Aorta (tissue), 5 donors: ENCODE measurements at regions of chr11 and their contacts with region 1.

Region 1: DNA sequence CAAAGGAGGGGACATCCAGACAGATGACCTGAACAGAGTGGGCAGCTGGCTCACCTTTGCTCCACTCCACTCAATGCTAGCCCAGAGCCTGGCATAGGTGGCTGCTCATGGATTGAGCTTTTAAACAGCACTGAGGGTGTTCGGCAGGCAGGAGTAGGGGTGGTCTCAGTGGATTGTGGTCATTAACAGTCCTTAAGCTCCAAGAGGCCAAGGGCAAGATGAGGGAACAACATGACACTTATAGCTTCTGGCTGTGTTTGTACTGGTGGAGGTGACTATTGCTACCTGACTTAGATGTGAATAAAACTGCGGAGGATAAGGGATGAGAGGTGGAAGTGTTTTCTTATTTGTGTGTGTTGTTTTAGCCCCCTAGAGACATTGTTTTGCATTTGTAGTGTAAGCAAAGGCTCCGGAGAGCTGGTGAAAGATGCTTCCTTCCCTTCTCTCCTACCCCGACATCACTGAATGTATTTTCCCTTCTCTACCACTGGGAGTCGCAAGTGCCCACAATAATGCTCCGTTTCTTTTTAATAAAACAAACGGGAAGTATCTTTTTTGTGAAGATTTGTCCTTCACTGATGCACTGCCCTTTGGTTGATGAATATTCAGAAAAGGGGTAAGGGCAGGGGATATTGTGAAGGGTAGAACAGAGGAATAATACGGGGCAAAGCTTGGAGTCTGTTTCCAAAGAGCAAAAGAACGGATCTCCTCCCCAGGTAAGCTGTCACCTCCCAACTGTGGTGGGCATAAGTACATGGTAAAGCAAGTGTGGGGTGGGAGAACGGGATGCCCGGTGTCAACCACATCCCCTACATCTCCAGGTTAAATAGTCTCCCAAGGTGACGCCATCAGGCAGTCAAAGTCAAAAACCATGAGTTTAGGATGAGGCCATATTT is 27.5 kb upstream of the MTNR1B start:
- DNase-seq: no peak
- ATAC-seq: no peak
- H3K4me3 ChIP-seq: no peak overlapping the region
- H3K27ac ChIP-seq: no peak overlapping the region
- H3K4me1 ChIP-seq: no peaks in the 10 kb centered on the region
- H3K27me3 ChIP-seq: no peaks in the 10 kb centered on the region

Region 2: GRCh38 chr11:92753151-92753550 is 188.8 kb before region 1 on chr11:
- intact Hi-C with region 1: no loop called
- DNase-seq: no peak
- ATAC-seq: no peak
- H3K4me3 ChIP-seq: no peak overlapping the region
- H3K27ac ChIP-seq: no peak overlapping the region
- H3K4me1 ChIP-seq: peaks cover 0 to 2% of the 10 kb centered on the region in 2 donors
- H3K27me3 ChIP-seq: no peaks in the 10 kb centered on the region

Region 3: GRCh38 chr11:92880381-92880780 is 61.5 kb before region 1 on chr11:
- intact Hi-C with region 1: no loop called
- DNase-seq: no peak
- ATAC-seq: no peak
- H3K4me3 ChIP-seq: no peak overlapping the region
- H3K27ac ChIP-seq: no peak overlapping the region
- H3K4me1 ChIP-seq: no peaks in the 10 kb centered on the region
- H3K27me3 ChIP-seq: no peaks in the 10 kb centered on the region

Region 4: DNA sequence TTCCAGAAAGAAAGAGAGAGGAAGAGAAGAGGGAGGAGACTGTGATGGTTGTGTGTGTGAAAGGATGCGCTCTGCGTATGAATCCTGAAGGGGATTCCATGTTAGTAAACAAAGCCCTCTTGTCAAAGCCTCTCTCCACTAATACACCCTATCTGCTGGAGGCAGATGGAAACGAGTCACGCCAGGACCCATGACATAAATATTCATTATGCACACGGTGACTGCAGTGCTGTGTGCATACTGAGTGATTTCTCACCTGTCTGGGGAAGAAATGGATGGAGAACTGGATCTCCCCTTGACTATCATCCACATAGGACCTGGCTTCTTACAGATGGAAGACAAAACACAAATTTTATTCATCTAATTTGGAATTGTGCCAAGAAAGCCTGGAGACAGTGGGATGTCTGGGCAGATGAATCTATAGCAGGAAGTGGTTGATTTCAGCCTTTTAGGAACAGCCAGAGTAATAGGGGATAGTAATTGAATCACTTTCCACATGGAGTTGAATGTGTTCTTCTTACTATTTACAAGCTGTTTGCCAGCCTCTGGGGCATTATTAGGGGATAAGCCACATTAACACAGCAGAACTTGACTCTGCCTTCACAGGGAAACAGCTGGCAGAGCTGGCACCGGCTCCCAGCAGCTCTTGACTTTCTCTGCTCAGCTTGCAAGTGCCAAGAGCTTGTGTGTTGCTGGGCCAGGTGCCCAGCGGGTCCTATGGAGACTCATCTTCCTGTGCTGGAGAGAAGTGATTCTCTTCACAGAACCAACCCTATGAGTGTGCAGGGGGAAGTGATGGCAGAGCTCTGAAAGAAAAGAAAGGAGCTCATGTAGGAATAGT is 36.6 kb after region 1 on chr11:
- intact Hi-C with region 1: no loop called
- DNase-seq: no peak
- ATAC-seq: no peak
- H3K4me3 ChIP-seq: no peak overlapping the region
- H3K27ac ChIP-seq: no peak overlapping the region
- H3K4me1 ChIP-seq: no peaks in the 10 kb centered on the region
- H3K27me3 ChIP-seq: no peaks in the 10 kb centered on the region

Region 5: DNA sequence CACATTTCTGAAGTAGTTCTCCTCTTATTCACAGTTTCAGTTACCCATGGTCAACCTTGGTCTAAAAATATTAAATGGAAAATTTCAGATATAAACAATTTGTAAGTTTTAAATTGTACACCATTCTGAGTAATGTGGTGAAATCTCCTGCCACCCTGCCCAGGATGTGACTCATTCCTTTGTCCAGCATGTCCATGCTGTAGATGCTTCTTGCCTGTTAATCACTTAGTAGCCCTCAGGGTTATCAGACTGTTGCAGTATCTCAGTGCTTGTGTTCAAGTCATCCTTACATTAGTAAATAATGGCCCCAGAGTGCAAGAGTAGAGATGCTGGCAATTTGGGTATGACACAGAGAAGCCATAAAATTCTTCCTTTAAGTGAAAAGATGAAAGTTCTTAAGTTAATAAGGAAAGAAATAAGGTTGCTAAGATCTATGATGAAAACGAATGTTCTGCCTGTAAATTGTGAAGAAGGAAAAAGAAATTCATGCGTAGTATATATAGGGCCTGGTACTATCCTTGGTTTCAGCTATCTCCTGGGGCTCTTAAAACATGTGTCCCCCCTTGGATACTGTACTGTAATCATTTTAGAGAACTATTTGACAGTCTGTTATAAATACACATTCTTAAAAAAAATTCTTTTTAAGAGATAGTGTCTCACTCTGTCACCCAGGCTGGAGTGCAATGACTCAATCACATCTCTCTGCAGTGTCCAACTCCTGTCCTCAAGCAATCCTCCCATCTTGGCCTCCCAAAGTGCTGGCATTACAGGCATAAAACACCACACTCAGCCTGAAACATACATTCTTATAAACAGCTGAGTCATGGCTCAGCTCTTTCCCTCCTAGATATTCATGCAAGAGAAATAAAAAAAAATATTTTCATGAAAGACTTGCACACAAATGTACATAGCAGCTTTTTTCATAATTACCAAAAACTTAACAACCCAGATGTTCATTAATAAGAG is 58.9 kb after region 1 on chr11:
- intact Hi-C with region 1: no loop called
- DNase-seq: no peak
- ATAC-seq: no peak
- H3K4me3 ChIP-seq: no peak overlapping the region
- H3K27ac ChIP-seq: no peak overlapping the region
- H3K4me1 ChIP-seq: no peaks in the 10 kb centered on the region
- H3K27me3 ChIP-seq: no peaks in the 10 kb centered on the region

Region 6: GRCh38 chr11:93063100-93063499 is 121.2 kb after region 1 on chr11:
- intact Hi-C with region 1: loop called in 1 of 2 experiments (anchors 10 kb)
- DNase-seq: no peak
- ATAC-seq: no peak
- H3K4me3 ChIP-seq: no peak overlapping the region
- H3K27ac ChIP-seq: no peak overlapping the region
- H3K4me1 ChIP-seq: no peaks in the 10 kb centered on the region
- H3K27me3 ChIP-seq: no peaks in the 10 kb centered on the region

Region 7: DNA sequence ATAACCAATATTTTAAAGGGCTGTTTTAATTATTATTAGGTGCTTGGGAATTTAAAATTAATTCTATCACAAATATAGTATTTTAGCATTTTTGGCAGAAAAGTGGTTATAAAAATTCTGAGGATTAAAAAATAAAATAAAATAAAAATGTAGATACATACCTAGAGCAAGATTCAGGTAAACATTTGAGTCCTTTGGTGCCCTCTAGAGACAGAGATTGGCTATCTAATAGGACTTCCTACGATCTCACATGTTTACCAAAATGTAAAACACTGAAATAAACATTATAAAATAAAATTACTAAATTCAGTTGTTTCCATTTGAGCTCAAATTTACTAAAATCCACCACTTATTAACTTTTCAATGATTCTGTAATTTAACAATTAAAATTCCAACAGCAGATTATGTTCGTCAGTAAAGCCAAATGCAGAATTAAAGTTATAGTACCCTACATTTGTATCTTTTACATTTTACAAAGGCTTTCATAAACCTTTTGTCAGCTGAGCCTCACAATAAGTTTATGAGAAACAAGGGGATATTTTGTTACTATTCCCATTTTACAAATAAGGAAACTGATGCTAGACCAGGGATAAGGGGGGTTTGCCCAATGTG is 228.1 kb after region 1 on chr11:
- intact Hi-C with region 1: loop called in 1 of 2 experiments (anchors 10 kb)
- DNase-seq: no peak
- ATAC-seq: no peak
- H3K4me3 ChIP-seq: no peak overlapping the region
- H3K27ac ChIP-seq: no peak overlapping the region
- H3K4me1 ChIP-seq: no peaks in the 10 kb centered on the region
- H3K27me3 ChIP-seq: no peaks in the 10 kb centered on the region

Region 8: DNA sequence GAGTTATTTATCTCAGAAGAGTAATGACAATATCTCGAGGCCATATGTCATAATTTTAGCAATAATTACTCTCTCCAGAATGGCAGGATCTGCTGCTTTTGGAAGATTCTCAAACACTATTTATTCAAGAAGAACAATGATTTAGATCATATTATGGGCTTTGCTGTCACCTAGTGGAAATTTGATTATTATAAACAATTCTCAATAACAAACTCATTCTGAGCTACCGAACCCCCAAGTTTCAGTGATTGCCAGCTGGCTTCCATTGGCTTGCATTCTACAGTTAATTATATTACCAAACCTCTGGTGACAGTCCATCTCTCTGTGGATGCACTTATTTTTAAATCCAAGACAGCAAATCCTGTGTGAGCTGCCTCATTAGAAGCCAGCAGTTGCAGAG is 283.7 kb after region 1 on chr11:
- intact Hi-C with region 1: loop called (anchors 5 kb)
- DNase-seq: no peak
- ATAC-seq: no peak
- H3K4me3 ChIP-seq: no peak overlapping the region
- H3K27ac ChIP-seq: no peak overlapping the region
- H3K4me1 ChIP-seq: no peaks in the 10 kb centered on the region
- H3K27me3 ChIP-seq: no peaks in the 10 kb centered on the region

Region 9: GRCh38 chr11:93543292-93543977 is 601.5 kb after region 1 on chr11 and contains the start of gene SMCO4:
- intact Hi-C with region 1: loop called in 1 of 2 experiments (anchors 5 kb)
- DNase-seq: peak; percentile 91 to 96
- ATAC-seq: peak; percentile 95
- H3K4me3 ChIP-seq: peak within 1 kb of the TSS; percentile 76 to 92
- H3K27ac ChIP-seq: peak within 1 kb of the TSS; percentile 28 to 82
- H3K4me1 ChIP-seq: no peaks in the 10 kb centered on the region
- H3K27me3 ChIP-seq: no peaks in the 10 kb centered on the region
- total RNA-seq, gene SMCO4: 24.9 to 26.4 TPM

Region 10: GRCh38 chr11:93652161-93652597 is 710.3 kb after region 1 on chr11:
- intact Hi-C with region 1: loop called in 1 of 2 experiments (anchors 5 kb)
- DNase-seq: no peak
- ATAC-seq: no peak
- H3K4me3 ChIP-seq: no peak overlapping the region
- H3K27ac ChIP-seq: no peak overlapping the region
- H3K4me1 ChIP-seq: no peaks in the 10 kb centered on the region
- H3K27me3 ChIP-seq: peaks cover 0 to 2% of the 10 kb centered on the region in 2 donors